B cell (primary cell): ENCODE measurements at regions of chr9 and their contacts with region 1.

Region 1: GRCh38 chr9:10863476-10863875 is 250.7 kb upstream of the PTPRD start:
- DNase-seq: no peak
- ATAC-seq: no peak
- H3K4me3 ChIP-seq: no peak overlapping the region
- H3K4me3 Mint-ChIP-seq: no peak overlapping the region
- H3K27ac ChIP-seq: no peak overlapping the region
- H3K27ac Mint-ChIP-seq: no peak overlapping the region
- H3K4me1 ChIP-seq: no peaks in the 10 kb centered on the region
- H3K4me1 Mint-ChIP-seq: no peaks in the 10 kb centered on the region
- H3K27me3 ChIP-seq: no peaks in the 10 kb centered on the region
- H3K27me3 Mint-ChIP-seq: no peaks in the 10 kb centered on the region
- CTCF ChIP-seq: no peak

Region 2: GRCh38 chr9:10764481-10764880 is 99.0 kb before region 1 on chr9:
- CTCF ChIA-PET with region 1: no interaction called
- POLR2A ChIA-PET with region 1: no interaction called
- intact Hi-C with region 1: no loop called
- DNase-seq: no peak
- ATAC-seq: no peak
- H3K4me3 ChIP-seq: no peak overlapping the region
- H3K4me3 Mint-ChIP-seq: no peak overlapping the region
- H3K27ac ChIP-seq: no peak overlapping the region
- H3K27ac Mint-ChIP-seq: no peak overlapping the region
- H3K4me1 ChIP-seq: no peaks in the 10 kb centered on the region
- H3K4me1 Mint-ChIP-seq: no peaks in the 10 kb centered on the region
- H3K27me3 ChIP-seq: no peaks in the 10 kb centered on the region
- H3K27me3 Mint-ChIP-seq: no peaks in the 10 kb centered on the region
- CTCF ChIP-seq: no peak

Region 3: DNA sequence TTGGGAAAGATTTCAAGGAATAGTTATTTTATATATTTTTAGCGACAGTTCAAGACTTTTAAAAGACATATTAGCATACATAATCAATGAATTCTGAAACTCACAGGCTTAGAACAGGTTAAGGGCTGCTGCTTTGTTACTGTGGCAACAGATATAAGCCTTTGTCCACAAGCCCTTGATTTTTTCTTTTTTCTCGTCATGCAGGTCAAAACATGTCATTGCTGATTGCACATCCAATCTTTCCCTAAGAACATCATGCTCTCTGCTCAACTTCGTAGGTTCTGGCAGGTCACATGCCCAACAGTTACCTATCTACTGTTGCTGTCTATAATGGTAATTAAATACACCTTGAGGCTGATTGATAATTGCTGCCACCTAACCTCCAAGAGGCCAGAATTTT is 78.2 kb before region 1 on chr9:
- CTCF ChIA-PET with region 1: no interaction called
- POLR2A ChIA-PET with region 1: no interaction called
- intact Hi-C with region 1: no loop called
- DNase-seq: no peak
- ATAC-seq: no peak
- H3K4me3 ChIP-seq: no peak overlapping the region
- H3K4me3 Mint-ChIP-seq: no peak overlapping the region
- H3K27ac ChIP-seq: no peak overlapping the region
- H3K27ac Mint-ChIP-seq: no peak overlapping the region
- H3K4me1 ChIP-seq: no peaks in the 10 kb centered on the region
- H3K4me1 Mint-ChIP-seq: no peaks in the 10 kb centered on the region
- H3K27me3 ChIP-seq: no peaks in the 10 kb centered on the region
- H3K27me3 Mint-ChIP-seq: no peaks in the 10 kb centered on the region
- CTCF ChIP-seq: no peak

Region 4: GRCh38 chr9:10806868-10807267 is 56.6 kb before region 1 on chr9:
- CTCF ChIA-PET with region 1: no interaction called
- POLR2A ChIA-PET with region 1: no interaction called
- intact Hi-C with region 1: loop called (anchors 10 kb)
- DNase-seq: no peak
- ATAC-seq: no peak
- H3K4me3 ChIP-seq: no peak overlapping the region
- H3K4me3 Mint-ChIP-seq: no peak overlapping the region
- H3K27ac ChIP-seq: no peak overlapping the region
- H3K27ac Mint-ChIP-seq: no peak overlapping the region
- H3K4me1 ChIP-seq: no peaks in the 10 kb centered on the region
- H3K4me1 Mint-ChIP-seq: no peaks in the 10 kb centered on the region
- H3K27me3 ChIP-seq: no peaks in the 10 kb centered on the region
- H3K27me3 Mint-ChIP-seq: no peaks in the 10 kb centered on the region
- CTCF ChIP-seq: no peak

Region 5: GRCh38 chr9:10818206-10818605 is 45.3 kb before region 1 on chr9:
- CTCF ChIA-PET with region 1: no interaction called
- POLR2A ChIA-PET with region 1: no interaction called
- intact Hi-C with region 1: no loop called
- DNase-seq: no peak
- ATAC-seq: no peak
- H3K4me3 ChIP-seq: no peak overlapping the region
- H3K4me3 Mint-ChIP-seq: no peak overlapping the region
- H3K27ac ChIP-seq: no peak overlapping the region
- H3K27ac Mint-ChIP-seq: no peak overlapping the region
- H3K4me1 ChIP-seq: no peaks in the 10 kb centered on the region
- H3K4me1 Mint-ChIP-seq: no peaks in the 10 kb centered on the region
- H3K27me3 ChIP-seq: no peaks in the 10 kb centered on the region
- H3K27me3 Mint-ChIP-seq: no peaks in the 10 kb centered on the region
- CTCF ChIP-seq: no peak

Region 6: GRCh38 chr9:10843151-10843550 is 20.3 kb before region 1 on chr9:
- CTCF ChIA-PET with region 1: no interaction called
- POLR2A ChIA-PET with region 1: no interaction called
- intact Hi-C with region 1: no loop called
- DNase-seq: no peak
- ATAC-seq: no peak
- H3K4me3 ChIP-seq: no peak overlapping the region
- H3K4me3 Mint-ChIP-seq: no peak overlapping the region
- H3K27ac ChIP-seq: no peak overlapping the region
- H3K27ac Mint-ChIP-seq: no peak overlapping the region
- H3K4me1 ChIP-seq: no peaks in the 10 kb centered on the region
- H3K4me1 Mint-ChIP-seq: no peaks in the 10 kb centered on the region
- H3K27me3 ChIP-seq: no peaks in the 10 kb centered on the region
- H3K27me3 Mint-ChIP-seq: no peaks in the 10 kb centered on the region
- CTCF ChIP-seq: no peak